ENCODE measurements at regions of chr4 and their contacts with region 1.

Region 1: DNA sequence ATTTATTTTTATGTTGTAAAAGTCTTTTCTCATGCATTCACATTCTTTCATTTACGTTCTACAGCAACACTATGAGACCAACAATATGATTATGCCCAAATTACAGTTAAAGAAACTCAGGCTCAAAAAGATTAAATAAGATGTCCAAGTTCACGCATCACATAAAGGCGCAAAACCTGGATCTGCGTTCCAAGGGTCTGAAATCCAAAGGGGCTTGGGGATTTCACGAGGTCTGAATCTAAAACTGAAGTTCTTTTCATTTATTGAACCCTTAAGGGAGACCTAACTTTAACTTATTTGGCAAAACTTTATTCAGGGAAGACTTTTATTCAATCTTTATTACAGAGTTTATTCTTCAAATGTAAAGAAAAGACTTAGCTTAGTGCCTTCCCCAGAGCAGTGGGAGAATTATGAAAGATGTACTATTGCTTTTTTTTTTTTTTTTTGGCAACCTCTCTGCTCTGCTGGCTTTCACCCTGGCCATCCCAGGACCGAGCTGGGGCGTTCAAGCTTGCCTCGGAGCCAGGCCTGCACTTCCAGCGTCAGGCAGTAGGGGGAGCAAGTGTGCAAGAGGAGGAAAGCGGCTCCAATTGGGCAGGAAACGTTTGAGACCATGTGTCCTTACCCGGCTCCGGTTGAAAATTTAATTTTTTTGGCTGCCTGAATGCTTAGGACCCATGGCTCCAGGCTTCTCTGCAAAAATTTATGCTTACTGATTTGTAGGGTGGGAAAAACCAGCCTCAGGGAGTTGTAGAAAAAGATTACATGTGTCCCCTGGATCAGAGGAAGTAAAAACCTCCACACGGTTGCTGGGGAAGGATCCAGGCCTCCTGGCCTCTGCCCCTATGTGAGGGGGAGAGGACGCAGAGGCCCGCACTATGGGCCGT is 344.3 kb upstream of the KLF3 start:
- DNase-seq: peak; percentile 74
- ATAC-seq: peak; percentile 80
- H3K4me3 ChIP-seq: peak overlapping the region; percentile 47
- H3K27ac ChIP-seq: peak overlapping the region; percentile 91
- H3K4me1 ChIP-seq: peaks cover 27% of the 10 kb centered on the region
- H3K27me3 ChIP-seq: no peaks in the 10 kb centered on the region
- CTCF ChIP-seq: peak; percentile 93 to 99 (median 99)
- EP300 ChIP-seq: no peak
- POLR2A ChIP-seq: no peak
- RAD21 ChIP-seq: peak; percentile 99

Region 2: DNA sequence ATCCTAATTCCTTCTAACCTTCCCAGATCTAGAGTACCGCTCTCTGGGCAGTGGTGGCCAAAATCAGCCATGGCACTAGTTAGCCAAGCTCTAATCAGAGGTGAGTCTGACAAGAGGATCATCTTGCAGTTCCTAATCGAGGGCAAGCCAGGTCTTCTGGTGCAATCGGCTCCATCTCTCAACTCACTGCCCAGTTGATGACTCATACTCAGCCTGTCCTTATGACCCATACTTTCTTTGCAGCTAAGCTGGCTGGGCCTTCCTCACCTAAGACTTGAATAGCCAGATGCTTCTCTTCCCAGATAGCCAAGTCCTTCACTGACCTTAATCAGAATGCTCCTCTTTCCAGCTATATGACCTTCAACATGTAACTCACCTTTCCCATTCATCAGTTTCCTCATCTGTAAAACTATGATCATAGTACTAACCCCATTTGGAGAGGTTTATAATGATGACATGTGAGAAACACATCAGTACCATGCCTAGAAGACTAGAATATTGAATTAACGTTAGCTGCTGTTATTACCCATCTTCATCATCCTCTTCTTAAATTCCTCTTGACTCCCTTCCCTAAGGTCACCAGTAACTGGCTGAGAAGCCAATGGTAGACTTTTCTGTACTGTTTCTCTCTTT is 690.6 kb before region 1 on chr4:
- CTCF ChIA-PET with region 1: no interaction called
- POLR2A ChIA-PET with region 1: no interaction called
- RAD21 ChIA-PET with region 1: no interaction called
- SMC1A ChIA-PET with region 1: no interaction called
- in situ Hi-C with region 1: no loop called
- intact Hi-C with region 1: no loop called
- DNase-seq: no peak
- ATAC-seq: no peak
- H3K4me3 ChIP-seq: no peak overlapping the region
- H3K27ac ChIP-seq: no peak overlapping the region
- H3K4me1 ChIP-seq: peaks cover 6% of the 10 kb centered on the region; the same call in 1 of the 2 replicates
- H3K27me3 ChIP-seq: no peaks in the 10 kb centered on the region
- CTCF ChIP-seq: no peak
- EP300 ChIP-seq: no peak
- POLR2A ChIP-seq: no peak
- RAD21 ChIP-seq: no peak

Region 3: DNA sequence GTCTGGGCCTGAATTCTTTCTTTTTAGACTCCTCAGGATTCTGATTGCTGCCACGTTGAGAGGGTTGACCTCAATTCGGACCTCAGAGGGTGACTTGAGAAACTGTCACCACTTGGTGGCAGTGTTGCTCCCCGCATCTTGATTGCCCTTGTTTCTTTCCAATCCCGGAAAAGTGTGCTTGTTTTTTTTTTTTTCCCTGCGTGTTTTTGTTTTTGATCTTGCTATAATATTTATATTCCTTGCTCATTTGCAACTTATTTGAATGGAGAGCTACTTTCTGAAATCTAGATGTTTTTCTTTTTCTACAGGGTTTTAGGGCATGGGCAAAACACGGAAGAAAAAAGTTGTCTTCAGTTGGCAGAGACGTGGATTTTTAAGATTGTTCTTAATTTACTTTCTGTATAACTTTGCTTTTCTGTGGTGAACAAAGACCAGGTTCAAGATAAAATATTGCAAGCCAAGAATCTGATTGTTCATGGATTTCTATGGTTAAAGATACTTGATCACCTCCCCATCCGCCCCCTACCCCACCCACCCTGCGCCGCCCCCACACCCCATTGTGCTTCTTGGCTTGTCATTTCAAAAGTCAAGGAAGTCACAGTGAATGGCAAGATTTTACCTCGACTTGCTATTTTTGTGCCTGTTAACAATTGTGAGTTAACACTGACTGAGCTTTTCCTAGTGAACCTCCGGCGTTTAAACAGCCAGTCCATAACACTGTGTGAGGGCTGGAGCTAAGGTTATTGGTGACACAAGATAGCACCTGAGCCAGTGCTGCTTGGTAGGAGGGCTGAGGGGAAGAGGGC is 257.4 kb before region 1 on chr4:
- CTCF ChIA-PET with region 1: interaction called, 17 read pairs
- POLR2A ChIA-PET with region 1: no interaction called
- RAD21 ChIA-PET with region 1: interaction called, 8 read pairs
- SMC1A ChIA-PET with region 1: interaction called, 10 read pairs
- in situ Hi-C with region 1: no loop called
- intact Hi-C with region 1: loop called (anchors 2 kb)
- DNase-seq: no peak
- ATAC-seq: peak; percentile 93
- H3K4me3 ChIP-seq: no peak overlapping the region
- H3K27ac ChIP-seq: peak overlapping the region; percentile 6
- H3K4me1 ChIP-seq: peaks cover 3% of the 10 kb centered on the region; the same call in 1 of the 2 replicates
- H3K27me3 ChIP-seq: no peaks in the 10 kb centered on the region
- CTCF ChIP-seq: peak; percentile 67 to 85 (median 80)
- EP300 ChIP-seq: no peak
- POLR2A ChIP-seq: no peak
- RAD21 ChIP-seq: peak; percentile 95

Region 4: GRCh38 chr4:38174801-38175200 is 144.9 kb before region 1 on chr4:
- CTCF ChIA-PET with region 1: interaction called, 50 read pairs
- POLR2A ChIA-PET with region 1: interaction called, 3 read pairs
- RAD21 ChIA-PET with region 1: interaction called, 73 read pairs
- SMC1A ChIA-PET with region 1: interaction called, 94 read pairs
- in situ Hi-C with region 1: no loop called
- intact Hi-C with region 1: loop called (anchors 1 kb)
- DNase-seq: no peak
- ATAC-seq: no peak
- H3K4me3 ChIP-seq: no peak overlapping the region
- H3K27ac ChIP-seq: no peak overlapping the region
- H3K4me1 ChIP-seq: peaks cover 36% of the 10 kb centered on the region
- H3K27me3 ChIP-seq: no peaks in the 10 kb centered on the region
- CTCF ChIP-seq: no peak
- EP300 ChIP-seq: no peak
- POLR2A ChIP-seq: no peak
- RAD21 ChIP-seq: no peak

Region 5: DNA sequence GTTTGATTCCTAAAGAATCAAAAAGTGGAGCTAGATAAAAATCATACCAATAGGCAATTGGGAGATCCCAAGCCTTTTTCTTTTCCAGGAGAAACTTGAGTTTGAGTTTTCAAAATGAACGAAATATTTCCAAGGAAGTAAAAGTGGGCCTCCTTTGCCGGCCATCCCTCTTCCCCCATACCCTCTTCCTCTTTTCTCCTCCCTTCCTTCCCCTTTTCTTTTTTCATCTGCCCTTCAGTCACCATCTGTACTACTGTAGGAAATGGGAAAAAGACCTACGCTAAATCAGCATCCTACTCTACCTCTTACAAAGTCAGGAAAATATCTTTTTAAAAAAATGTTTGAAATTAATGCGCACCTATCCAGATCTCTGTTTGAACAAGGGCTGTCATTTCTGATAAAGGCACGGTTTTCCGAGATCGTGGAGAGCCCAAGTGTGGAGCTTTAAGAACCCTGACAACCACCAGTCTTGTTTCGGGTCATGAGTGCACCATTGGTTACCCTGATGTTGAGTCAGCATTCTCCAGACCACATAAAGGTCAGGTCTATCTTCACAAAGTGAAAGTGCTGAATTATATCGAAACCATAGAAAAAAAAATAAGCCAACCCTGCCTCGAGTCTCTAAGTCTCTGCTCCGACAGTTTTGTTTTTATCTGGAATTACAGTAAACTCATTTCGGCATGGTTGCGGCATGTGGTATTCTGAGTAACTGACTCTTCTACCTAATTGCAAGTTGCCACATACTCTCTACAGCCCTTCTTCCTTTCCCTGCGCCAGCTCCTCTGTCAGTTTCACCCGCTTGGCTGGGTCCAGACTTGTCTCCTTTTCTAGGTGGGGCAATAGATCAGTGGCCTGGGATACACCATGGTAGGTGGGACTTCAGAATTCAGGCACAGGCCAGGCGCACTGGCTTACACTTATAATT is 204.1 kb after region 1 on chr4:
- CTCF ChIA-PET with region 1: interaction called, 4 read pairs
- POLR2A ChIA-PET with region 1: no interaction called
- RAD21 ChIA-PET with region 1: no interaction called
- SMC1A ChIA-PET with region 1: interaction called, 3 read pairs
- in situ Hi-C with region 1: no loop called
- intact Hi-C with region 1: loop called (anchors 5 kb)
- DNase-seq: peak; percentile 82
- ATAC-seq: peak; percentile 99
- H3K4me3 ChIP-seq: peak overlapping the region; percentile 35; the same call in 1 of the 2 replicates
- H3K27ac ChIP-seq: peak overlapping the region; percentile 57
- H3K4me1 ChIP-seq: peaks cover 14% of the 10 kb centered on the region
- H3K27me3 ChIP-seq: no peaks in the 10 kb centered on the region
- CTCF ChIP-seq: no peak
- EP300 ChIP-seq: peak; percentile 46 to 60; a peak in 3 of 4 replicates
- POLR2A ChIP-seq: no peak
- RAD21 ChIP-seq: peak; percentile 15

Region 6: GRCh38 chr4:38730830-38731646 is 411.3 kb after region 1 on chr4:
- CTCF ChIA-PET with region 1: interaction called, 13 read pairs
- POLR2A ChIA-PET with region 1: no interaction called
- RAD21 ChIA-PET with region 1: interaction called, 13 read pairs
- SMC1A ChIA-PET with region 1: interaction called, 13 read pairs
- in situ Hi-C with region 1: no loop called
- intact Hi-C with region 1: loop called (anchors 1 kb)
- DNase-seq: peak; percentile 87
- ATAC-seq: peak; percentile 97
- H3K4me3 ChIP-seq: no peak overlapping the region
- H3K27ac ChIP-seq: peak overlapping the region; percentile 57
- H3K4me1 ChIP-seq: peaks cover 16% of the 10 kb centered on the region
- H3K27me3 ChIP-seq: no peaks in the 10 kb centered on the region; a peak in 1 of 4 replicates
- CTCF ChIP-seq: peak; percentile 69 to 96 (median 89)
- EP300 ChIP-seq: peak; percentile 75 to 91; a peak in 3 of 4 replicates
- POLR2A ChIP-seq: no peak
- RAD21 ChIP-seq: peak; percentile 97